ENCODE measurements at regions of chr20 and their contacts with region 1.

Region 1: GRCh38 chr20:49610701-49611538 is 43.0 kb upstream of the PTGIS start:
- DNase-seq: peak; percentile 62 to 89 (median 75)
- ATAC-seq: peak in 3 of 4 donors; percentile 69 to 75 (median 71)
- H3K4me3 ChIP-seq: peak overlapping the region in 8 of 12 donors; percentile 3 to 34 (median 16)
- H3K27ac ChIP-seq: peak overlapping the region in 2 of 12 donors; percentile 34 to 52
- H3K4me1 ChIP-seq: peaks cover 0 to 40% (median 14%) of the 10 kb centered on the region in 12 donors
- H3K27me3 ChIP-seq: peaks cover 0 to 8% (median 0%) of the 10 kb centered on the region in 9 donors
- CTCF ChIP-seq: peak in 11 of 12 donors; percentile 97 to 100 (median 100)
- POLR2A ChIP-seq: no peak

Region 2: GRCh38 chr20:49338061-49338460 is 272.9 kb before region 1 on chr20:
- intact Hi-C with region 1: loop called in 9 of 10 experiments (anchors 2 to 10 kb)
- DNase-seq: no peak
- ATAC-seq: no peak
- H3K4me3 ChIP-seq: no peak overlapping the region
- H3K27ac ChIP-seq: no peak overlapping the region
- H3K4me1 ChIP-seq: no peaks in the 10 kb centered on the region
- H3K27me3 ChIP-seq: peaks cover 0 to 7% (median 0%) of the 10 kb centered on the region in 9 donors
- CTCF ChIP-seq: no peak
- POLR2A ChIP-seq: no peak

Region 3: DNA sequence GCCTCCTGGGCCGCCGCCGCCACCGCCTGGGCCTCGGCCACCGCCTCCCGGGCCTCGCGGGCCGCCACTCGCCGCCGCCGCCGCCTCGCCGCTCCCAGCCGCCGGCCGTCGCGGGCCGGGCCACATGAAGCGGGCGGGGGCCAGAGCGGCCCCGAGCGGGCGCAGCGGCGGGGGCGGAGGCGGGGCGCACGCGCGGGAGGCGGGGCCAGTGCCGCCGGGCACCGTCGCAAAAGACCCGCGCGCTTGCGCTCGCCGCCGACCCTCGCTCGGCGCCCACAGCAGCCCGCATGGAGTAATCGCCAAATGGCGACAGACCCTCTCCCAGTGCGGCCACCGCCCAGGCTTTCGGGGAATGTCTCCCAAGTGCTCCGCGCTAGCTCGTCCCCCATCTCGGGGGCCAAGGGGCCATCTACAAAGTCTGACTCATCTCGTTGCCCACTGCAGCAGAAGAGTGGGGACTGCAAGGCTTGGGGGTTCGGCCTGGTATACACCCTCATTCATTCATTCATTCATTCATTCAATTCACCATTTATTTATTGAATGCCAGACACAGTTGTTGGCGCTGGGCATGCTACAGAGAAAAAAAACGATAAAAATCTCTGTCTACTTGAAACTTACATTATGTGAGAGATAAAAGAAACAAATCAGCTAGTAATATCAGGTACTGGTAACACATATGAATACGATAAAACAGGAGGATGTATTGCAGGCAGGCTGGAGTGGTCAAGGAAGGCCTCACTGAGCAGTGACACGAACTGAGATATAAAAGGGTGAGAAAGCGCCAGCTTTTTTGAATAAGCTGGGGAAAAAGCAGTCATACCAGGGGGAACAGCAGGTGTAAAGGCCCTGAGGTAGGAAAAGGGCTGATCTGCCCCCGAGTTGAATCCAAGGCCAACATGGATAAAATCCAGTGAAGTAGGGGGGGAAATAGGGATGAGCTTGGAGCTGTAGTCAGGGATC is 103.1 kb after region 1 on chr20 and contains the start of gene B4GALT5:
- intact Hi-C with region 1: loop called in 5 of 10 experiments (anchors 5 to 10 kb)
- DNase-seq: peak; percentile 75 to 88 (median 80)
- ATAC-seq: peak; percentile 65 to 94 (median 86)
- H3K4me3 ChIP-seq: peak within 1 kb of the TSS; percentile 77 to 99 (median 98)
- H3K27ac ChIP-seq: peak within 1 kb of the TSS; percentile 69 to 97 (median 94)
- H3K4me1 ChIP-seq: peaks cover 0 to 46% (median 29%) of the 10 kb centered on the region in 12 donors
- H3K27me3 ChIP-seq: no peaks in the 10 kb centered on the region
- CTCF ChIP-seq: no peak
- POLR2A ChIP-seq: peak in 1 of 2 donors; percentile 41
- total RNA-seq, gene B4GALT5: 17.0 to 60.4 (median 33.5) TPM

Region 4: GRCh38 chr20:49821870-49822331 is 211.0 kb after region 1 on chr20:
- intact Hi-C with region 1: loop called in 4 of 10 experiments (anchors 5 to 10 kb)
- DNase-seq: peak in 3 of 5 donors; percentile 12 to 49 (median 47)
- ATAC-seq: peak; percentile 64 to 92 (median 82)
- H3K4me3 ChIP-seq: no peak overlapping the region
- H3K27ac ChIP-seq: peak overlapping the region in 1 of 12 donors; percentile 28
- H3K4me1 ChIP-seq: peaks cover 0 to 39% (median 8%) of the 10 kb centered on the region in 12 donors
- H3K27me3 ChIP-seq: no peaks in the 10 kb centered on the region
- CTCF ChIP-seq: peak in 10 of 12 donors; percentile 12 to 55 (median 36)
- POLR2A ChIP-seq: no peak

Region 5: DNA sequence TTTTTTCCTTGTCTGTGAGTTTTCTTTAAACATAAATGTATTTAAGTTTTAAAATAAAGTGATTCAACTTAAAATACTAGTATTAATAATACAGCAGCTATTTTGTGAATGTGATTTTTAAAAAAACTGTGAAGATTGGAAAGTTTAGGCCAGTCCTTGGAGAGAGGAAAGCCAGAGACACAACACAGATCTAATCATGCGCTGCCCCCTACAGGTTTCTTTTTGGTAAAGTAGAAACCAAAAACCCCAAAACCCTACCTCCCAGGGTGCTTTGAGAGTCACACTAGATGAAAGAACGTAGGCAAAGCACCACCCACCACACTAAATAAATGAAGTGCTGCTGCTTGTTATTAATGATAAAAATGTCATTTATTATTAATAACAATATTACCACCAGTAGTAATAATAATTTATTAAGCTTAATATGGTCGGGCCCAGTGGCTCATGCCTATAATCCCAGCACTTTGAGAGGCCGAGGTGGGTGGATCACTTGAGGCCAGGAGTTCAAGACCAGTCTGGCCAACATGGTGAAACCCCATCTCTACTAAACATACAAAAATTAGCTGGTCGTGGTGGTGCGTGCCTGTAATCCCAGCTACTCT is 235.4 kb after region 1 on chr20:
- intact Hi-C with region 1: loop called (anchors 1 to 10 kb)
- DNase-seq: peak in 1 of 5 donors; percentile 38
- ATAC-seq: peak; percentile 56 to 79 (median 62)
- H3K4me3 ChIP-seq: no peak overlapping the region
- H3K27ac ChIP-seq: no peak overlapping the region
- H3K4me1 ChIP-seq: peaks cover 0 to 25% (median 14%) of the 10 kb centered on the region in 12 donors
- H3K27me3 ChIP-seq: no peaks in the 10 kb centered on the region
- CTCF ChIP-seq: peak; percentile 42 to 72 (median 59)
- POLR2A ChIP-seq: no peak

Region 6: DNA sequence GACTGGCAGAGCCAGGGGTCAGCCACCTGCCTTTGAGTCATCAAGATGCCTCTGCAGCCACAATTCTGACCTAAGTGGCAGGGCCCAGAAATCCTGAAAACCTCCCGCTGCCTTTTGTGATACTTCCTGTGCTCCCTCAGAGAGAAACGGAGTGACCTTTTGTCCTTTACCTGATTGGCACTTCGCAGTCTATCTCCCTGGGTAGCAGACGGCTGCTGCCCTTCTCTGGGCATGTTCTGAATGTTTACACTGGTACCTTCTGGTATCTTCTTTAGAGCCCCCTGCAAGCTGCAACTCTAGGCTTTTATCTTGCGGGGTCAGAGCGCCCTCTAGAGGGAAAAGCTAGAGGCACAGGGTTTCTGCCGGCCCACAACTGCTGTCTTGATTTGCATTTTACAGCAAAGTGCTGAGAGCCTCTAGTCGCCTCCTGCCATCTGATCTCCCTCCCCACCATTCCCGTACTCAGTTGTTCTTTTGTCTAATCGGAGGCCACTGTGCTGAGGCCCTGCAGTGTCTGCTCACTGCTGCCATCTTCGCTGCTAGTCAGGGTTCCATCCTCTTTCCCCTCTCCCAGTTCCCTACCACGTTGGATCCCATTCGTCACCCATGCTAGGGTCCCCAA is 277.5 kb after region 1 on chr20:
- intact Hi-C with region 1: loop called in 7 of 10 experiments (anchors 1 to 5 kb)
- DNase-seq: peak in 1 of 5 donors; percentile 65
- ATAC-seq: peak in 2 of 4 donors; percentile 8 to 9
- H3K4me3 ChIP-seq: no peak overlapping the region
- H3K27ac ChIP-seq: peak overlapping the region in 11 of 12 donors; percentile 35 to 79 (median 59)
- H3K4me1 ChIP-seq: peaks cover 0 to 70% (median 49%) of the 10 kb centered on the region in 12 donors
- H3K27me3 ChIP-seq: no peaks in the 10 kb centered on the region
- CTCF ChIP-seq: peak; percentile 63 to 79 (median 74)
- POLR2A ChIP-seq: no peak

Region 7: GRCh38 chr20:49928401-49929141 is 317.7 kb after region 1 on chr20:
- intact Hi-C with region 1: loop called in 7 of 10 experiments (anchors 1 to 10 kb)
- DNase-seq: peak; percentile 65 to 81 (median 73)
- ATAC-seq: peak; percentile 80 to 87 (median 83)
- H3K4me3 ChIP-seq: no peak overlapping the region
- H3K27ac ChIP-seq: peak overlapping the region in 2 of 12 donors; percentile 7 to 61
- H3K4me1 ChIP-seq: peaks cover 0 to 18% (median 1%) of the 10 kb centered on the region in 12 donors
- H3K27me3 ChIP-seq: no peaks in the 10 kb centered on the region
- CTCF ChIP-seq: peak; percentile 86 to 97 (median 92)
- POLR2A ChIP-seq: no peak

Measured in heart left ventricle (tissue), 16 donors.